Right cardiac atrium (tissue), 5 donors: ENCODE measurements at regions of chr9 and their contacts with region 1.

Region 1: GRCh38 chr9:130866474-130866965 is 30.1 kb downstream of the QRFP start:
- DNase-seq: peak; percentile 65 to 79 (median 72)
- ATAC-seq: peak; percentile 34 to 51
- H3K4me3 ChIP-seq: no peak overlapping the region
- H3K27ac ChIP-seq: no peak overlapping the region
- H3K4me1 ChIP-seq: peaks cover 4% of the 10 kb centered on the region
- H3K27me3 ChIP-seq: no peaks in the 10 kb centered on the region

Region 2: DNA sequence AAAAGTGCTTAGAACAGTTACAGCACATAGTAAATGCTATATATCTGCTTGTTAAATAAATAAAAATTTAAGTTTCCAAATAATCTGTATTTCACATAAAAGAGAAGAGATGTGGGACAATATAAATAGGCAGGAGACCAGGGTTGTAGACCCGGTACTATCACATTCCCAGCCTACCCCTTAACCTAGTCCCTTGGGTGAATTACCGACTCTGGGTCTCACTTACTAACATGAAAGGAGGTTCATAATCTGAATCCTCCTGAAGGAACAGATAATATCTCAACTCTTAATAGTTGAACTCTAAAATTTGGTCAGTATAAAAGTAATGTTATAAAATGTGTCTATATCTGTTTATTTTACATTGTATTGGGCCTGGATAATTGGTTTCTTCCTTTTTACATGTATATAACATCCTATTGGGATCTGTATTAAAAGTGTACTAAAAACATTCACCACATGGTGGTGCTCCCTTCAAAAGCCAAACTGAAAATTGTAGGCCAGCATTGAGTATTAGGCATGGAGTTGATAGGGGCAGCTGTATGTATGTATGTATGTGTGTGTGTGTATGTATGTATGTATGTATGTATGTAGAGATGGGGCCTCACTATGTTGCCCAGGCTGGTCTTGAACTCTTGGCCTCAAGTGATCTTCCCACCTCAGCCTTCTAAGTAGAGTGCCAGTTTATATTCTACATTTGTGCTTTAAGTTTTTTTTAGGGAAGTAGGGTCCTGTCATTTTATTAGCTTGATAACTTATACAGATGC is 95.7 kb before region 1 on chr9:
- intact Hi-C with region 1: loop called in 3 of 4 experiments (anchors 5 to 10 kb)
- DNase-seq: no peak
- ATAC-seq: peak; percentile 56 to 72
- H3K4me3 ChIP-seq: no peak overlapping the region
- H3K27ac ChIP-seq: no peak overlapping the region
- H3K4me1 ChIP-seq: peaks cover 7% of the 10 kb centered on the region
- H3K27me3 ChIP-seq: no peaks in the 10 kb centered on the region

Region 3: DNA sequence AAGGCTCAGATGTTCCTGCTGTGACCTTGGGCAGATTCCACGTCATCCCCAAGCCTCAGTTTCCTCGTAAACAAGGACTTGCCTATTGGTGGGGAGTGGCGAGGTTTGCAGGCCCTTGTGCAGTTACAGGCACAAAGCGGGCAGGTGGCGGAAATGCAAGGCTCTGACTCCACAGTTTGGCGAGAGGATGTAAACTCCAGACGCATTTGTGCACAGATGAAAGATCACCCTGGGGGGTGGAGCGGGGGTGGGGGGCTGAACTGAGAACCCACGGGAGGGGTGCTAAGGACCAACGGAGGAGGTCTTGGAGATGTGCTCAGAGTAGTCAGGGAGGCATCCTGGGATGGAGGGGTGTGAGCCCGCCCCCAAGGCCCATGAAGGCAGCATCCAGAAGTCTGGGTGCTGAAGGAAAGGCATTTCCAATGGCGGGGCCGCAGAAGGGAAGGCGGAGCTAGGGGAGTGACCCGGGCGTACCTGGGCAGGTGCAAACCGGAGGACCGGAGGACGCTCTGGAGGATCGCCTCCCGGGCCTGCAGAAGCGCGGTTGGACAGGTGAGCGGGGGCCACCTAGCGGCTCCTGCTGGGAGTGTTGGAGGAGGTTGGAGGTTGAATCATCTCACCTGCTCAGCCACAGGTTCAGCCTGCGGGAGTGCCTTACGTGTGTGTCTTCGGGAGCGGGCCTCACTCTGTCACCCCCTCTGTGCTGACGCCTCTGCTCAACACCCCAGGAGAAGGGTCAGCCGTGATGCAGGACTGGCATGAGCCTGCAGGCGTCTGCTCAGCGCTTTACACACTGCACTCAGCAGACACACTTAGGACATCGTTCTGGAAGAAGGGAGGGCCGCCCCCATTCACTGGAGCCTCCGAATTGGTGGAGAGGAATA is 74.4 kb after region 1 on chr9:
- intact Hi-C with region 1: loop called in 2 of 4 experiments (anchors 5 kb)
- DNase-seq: peak; percentile 49 to 86 (median 85)
- ATAC-seq: peak; percentile 67 to 74
- H3K4me3 ChIP-seq: no peak overlapping the region
- H3K27ac ChIP-seq: no peak overlapping the region
- H3K4me1 ChIP-seq: peaks cover 3% of the 10 kb centered on the region
- H3K27me3 ChIP-seq: no peaks in the 10 kb centered on the region

Region 4: DNA sequence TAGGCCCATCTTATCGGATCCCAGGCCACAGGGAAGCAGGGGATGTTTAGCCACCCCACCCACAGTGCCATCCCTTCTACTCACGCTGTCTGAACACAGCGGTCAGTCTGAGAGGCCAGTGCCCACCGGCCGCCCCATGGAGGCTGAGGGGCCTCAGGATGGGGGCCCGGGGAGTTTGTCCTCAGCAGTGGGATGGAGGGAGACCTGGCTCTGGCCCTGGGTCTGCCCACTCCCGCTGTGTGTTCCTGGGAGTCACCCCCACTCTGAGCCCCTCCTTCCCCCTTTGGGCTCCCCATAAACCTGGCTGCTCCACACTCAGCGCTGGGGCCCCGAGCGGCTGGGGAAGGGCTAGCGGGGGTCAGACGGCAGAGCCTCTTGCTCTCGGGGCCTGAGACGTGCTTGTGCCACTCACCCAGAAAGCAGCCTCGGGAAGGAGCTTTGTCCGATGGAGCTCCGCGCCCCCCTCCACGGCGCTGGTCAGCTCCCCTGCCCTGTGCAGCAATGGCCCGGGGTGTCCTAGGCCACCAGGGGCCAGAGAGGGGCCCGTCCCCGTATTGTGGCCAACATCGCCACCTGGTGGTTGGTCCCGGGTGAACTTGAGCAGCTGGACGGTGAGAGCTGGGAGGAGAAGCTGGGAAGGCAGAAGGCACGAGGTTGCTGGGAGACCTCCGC is 131.5 kb after region 1 on chr9:
- intact Hi-C with region 1: loop called in 3 of 4 experiments (anchors 5 to 10 kb)
- DNase-seq: peak; percentile 62 to 88 (median 87)
- ATAC-seq: peak; percentile 66 to 83
- H3K4me3 ChIP-seq: no peak overlapping the region
- H3K27ac ChIP-seq: no peak overlapping the region
- H3K4me1 ChIP-seq: no peaks in the 10 kb centered on the region
- H3K27me3 ChIP-seq: no peaks in the 10 kb centered on the region

Region 5: DNA sequence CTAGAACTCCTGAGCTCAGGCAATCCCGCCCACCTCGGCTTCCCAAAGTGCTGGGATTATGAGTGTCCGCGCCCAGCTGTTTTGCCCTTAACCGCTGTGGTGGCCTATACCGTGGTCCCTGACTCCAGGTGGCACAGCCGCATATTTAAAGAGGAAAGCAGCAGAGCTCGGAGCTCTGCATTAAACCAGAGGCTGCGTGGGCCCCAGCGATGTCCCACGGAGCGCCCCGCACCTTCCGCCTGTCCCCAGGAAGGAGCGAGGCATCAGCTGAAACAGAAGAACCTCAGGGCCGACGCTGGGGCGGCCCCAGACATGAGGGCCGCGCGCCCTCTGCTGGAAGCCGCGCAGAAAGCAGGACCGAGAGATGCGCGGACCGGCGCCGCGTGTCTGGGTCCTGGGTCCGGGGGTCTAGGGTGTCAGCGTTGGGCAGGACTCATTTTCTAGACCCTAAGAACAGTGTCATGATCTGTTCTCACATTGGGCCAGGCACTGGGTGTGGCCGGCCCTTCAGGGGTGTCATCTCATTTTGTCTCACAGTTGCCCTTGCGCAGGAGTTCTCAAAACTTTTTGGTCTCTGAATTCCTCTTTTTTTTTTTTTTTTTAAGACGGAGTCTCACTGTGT is 180.2 kb after region 1 on chr9:
- intact Hi-C with region 1: loop called in 2 of 4 experiments (anchors 5 kb)
- DNase-seq: peak; percentile 73 to 90 (median 85)
- ATAC-seq: peak; percentile 77 to 84
- H3K4me3 ChIP-seq: no peak overlapping the region
- H3K27ac ChIP-seq: no peak overlapping the region
- H3K4me1 ChIP-seq: no peaks in the 10 kb centered on the region
- H3K27me3 ChIP-seq: no peaks in the 10 kb centered on the region